Right ventricle myocardium inferior (tissue), 1 donor: ENCODE measurements at regions of chr19 and their contacts with region 1.

Region 1: GRCh38 chr19:7799640-7800355 is 30.2 kb upstream of the EVI5L start:
- DNase-seq: peak; percentile 91
- ATAC-seq: peak; percentile 75

Region 2: DNA sequence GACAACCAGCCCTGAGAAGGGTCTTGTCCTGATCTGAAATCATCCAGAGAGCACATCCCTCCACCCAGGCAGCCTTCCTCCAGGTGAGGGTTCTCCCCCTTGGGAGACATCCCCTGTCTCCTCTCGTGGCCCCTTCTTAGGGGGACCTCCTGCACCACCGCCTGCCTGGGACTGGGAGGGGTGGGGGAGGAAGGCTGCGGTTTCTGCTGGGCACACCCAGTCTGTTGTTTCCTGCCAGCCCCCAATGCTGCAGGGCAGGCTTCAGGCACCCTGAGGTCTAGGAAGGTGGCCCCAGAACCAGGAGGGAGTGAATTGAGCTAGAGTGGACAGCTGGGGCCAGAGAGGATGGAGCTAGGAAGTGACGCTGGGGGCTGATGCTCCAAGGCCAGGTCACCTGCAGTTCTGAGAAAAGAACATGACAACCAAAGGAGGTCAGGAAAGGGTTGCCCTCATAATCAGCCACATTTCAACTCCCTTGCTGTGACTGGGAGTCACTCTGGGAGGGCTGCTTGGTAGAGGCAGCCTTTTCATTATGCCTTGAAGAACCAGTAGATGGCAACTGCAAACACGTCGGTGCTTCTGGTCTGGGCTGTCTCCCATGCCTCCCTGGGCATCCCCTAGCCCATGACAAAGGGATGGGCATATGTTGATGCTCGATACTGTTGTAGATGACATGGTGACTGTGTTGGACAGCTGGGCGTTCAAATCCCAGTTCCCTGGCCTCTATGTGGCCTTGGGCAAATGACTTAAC is 449.7 kb before region 1 on chr19:
- intact Hi-C with region 1: loop called (anchors 1 kb)
- DNase-seq: no peak
- ATAC-seq: no peak

Region 3: DNA sequence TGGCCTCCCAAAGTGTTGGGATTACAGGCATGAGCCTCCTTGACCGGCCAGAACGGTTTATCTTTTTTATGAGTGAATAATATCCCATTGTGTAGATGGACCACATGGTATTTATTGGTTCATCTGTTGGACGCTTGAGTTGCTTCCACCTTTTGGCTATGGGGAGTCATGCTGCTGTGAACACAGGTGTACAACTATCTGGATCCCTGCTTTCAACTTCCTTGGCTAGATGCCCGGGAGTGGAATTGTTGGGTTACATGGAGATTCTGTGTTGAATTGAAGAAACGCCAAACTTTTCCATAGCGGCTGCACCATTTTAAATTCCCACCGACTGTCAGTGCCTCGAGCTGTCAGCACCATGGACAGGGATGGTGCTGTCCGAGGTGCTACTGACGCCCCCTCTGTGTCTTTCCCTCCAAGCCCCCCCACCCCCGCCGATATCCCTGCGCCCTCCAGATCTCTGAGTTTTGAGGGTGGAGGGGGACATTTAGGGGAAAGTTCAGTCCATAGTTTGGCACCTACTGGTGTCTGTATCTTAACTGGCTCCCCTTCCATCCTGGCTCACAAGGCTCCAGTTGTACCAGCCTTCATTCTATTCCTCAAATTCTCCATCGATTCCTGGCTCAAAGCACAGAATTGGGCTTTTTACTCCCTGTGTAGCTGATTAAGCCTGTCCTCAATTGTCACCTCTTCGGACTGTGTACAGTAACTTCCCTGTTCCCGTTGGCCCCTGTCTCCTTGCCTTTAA is 237.0 kb before region 1 on chr19:
- intact Hi-C with region 1: loop called (anchors 2 kb)
- DNase-seq: no peak
- ATAC-seq: no peak

Region 4: DNA sequence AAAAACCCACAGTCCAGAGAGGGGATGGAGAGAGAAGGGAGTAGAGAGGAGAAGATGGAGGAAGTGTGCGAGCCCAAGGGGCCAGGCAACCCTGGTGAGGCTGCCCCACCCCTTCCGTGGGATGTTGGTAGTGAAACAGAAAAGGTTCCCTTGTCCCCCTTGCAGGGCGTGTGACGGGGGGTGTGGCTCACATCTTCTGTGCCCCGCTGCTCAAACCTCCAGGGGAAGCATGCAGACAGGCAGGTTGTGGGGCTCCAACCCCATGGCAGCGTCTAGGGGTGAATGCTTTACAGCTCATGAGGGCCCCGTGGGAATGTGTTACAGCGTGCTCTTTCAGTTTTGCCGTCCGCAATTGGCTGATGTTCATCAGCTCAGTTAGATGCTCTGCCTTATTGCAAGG is 15.5 kb after region 1 on chr19:
- intact Hi-C with region 1: no loop called
- DNase-seq: no peak
- ATAC-seq: no peak